ENCODE measurements at regions of chr13 and their contacts with region 1.

Region 1: GRCh38 chr13:60540276-60540675 is 143.3 kb downstream of the TDRD3 start:
- DNase-seq: no peak
- H3K4me3 ChIP-seq: no peak overlapping the region
- H3K27ac ChIP-seq: no peak overlapping the region
- H3K4me1 ChIP-seq: no peaks in the 10 kb centered on the region
- H3K27me3 ChIP-seq: no peaks in the 10 kb centered on the region
- CTCF ChIP-seq: no peak
- POLR2A ChIP-seq: no peak

Region 2: DNA sequence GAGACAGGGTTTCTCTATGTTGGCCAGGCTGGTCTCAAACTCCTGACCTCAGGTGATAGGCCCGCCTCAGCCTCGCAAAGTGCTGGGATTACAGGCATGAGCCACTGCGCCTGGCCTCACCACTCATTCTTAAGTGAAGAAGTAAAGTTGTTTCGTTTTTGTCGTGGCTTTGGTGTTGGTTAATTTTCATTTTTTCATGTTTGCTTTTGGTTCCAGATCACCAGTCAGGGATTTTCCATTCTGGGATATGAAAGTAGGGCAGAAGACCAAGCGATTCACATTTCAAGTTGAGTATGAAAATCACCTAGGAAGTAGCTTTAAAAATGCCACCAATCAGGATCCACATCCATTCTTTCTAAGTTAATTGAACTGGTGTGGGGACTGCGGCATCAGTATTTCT is 666.4 kb before region 1 on chr13:
- intact Hi-C with region 1: loop called (anchors 5 kb)
- DNase-seq: no peak
- H3K4me3 ChIP-seq: no peak overlapping the region
- H3K27ac ChIP-seq: no peak overlapping the region
- H3K4me1 ChIP-seq: no peaks in the 10 kb centered on the region
- H3K27me3 ChIP-seq: no peaks in the 10 kb centered on the region
- CTCF ChIP-seq: no peak
- POLR2A ChIP-seq: no peak